B cell (primary cell): ENCODE measurements at regions of chr3 and their contacts with region 1.

Region 1: GRCh38 chr3:58305882-58306711 is at the starts of genes HTD2 and RPP14:
- DNase-seq: peak; percentile 99
- ATAC-seq: peak; percentile 90
- H3K4me3 ChIP-seq: peak within 1 kb of the TSS; percentile 74 to 87 (median 83)
- H3K4me3 Mint-ChIP-seq: peak within 1 kb of the TSS; percentile 98
- H3K27ac ChIP-seq: peak within 1 kb of the TSS; percentile 96 to 99
- H3K27ac Mint-ChIP-seq: peak within 1 kb of the TSS; percentile 100
- H3K4me1 ChIP-seq: peaks cover 24 to 27% of the 10 kb centered on the region in 2 donors
- H3K4me1 Mint-ChIP-seq: peaks cover 31% of the 10 kb centered on the region
- H3K27me3 ChIP-seq: no peaks in the 10 kb centered on the region
- H3K27me3 Mint-ChIP-seq: no peaks in the 10 kb centered on the region
- CTCF ChIP-seq: peak; percentile 90
- total RNA-seq, gene HTD2: 8.8 and 9.3 TPM in 2 replicates
- total RNA-seq, gene RPP14: 17.9 and 18.3 TPM in 2 replicates

Region 2: DNA sequence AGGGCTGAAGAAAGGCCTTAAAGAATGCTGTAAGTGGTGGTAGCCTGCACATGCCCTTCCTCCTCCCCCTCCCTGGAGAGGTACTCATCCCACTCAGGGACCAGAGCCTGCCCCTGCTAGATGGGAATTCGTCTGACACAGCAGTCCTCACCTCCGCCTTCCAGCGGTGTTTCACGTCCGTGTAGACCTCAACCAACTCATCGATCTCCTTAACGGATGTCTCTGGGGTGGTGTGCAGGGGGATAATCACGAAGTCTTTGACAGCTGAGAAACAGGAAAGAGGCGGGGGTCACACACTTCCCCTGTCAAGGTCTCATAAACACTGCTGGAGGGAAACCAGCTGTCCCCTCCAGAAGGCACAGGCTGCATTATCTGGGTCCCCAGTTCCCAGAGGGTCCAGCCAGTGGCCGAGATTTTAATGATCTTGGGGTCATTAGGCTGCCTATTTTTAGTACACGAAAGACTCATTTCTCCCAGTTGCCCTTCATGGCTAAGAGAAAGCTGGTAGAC is 105.2 kb before region 1 on chr3:
- CTCF ChIA-PET with region 1: interaction called, 17 read pairs
- POLR2A ChIA-PET with region 1: no interaction called
- intact Hi-C with region 1: no loop called
- DNase-seq: peak; percentile 44
- ATAC-seq: no peak
- H3K4me3 ChIP-seq: peak overlapping the region in 3 of 5 experiments; percentile 25 to 43 (median 41)
- H3K4me3 Mint-ChIP-seq: peak overlapping the region; percentile 76
- H3K27ac ChIP-seq: peak overlapping the region; percentile 51 to 57
- H3K27ac Mint-ChIP-seq: peak overlapping the region; percentile 87
- H3K4me1 ChIP-seq: peaks cover 69 to 74% of the 10 kb centered on the region in 2 donors
- H3K4me1 Mint-ChIP-seq: peaks cover 67% of the 10 kb centered on the region
- H3K27me3 ChIP-seq: no peaks in the 10 kb centered on the region
- H3K27me3 Mint-ChIP-seq: no peaks in the 10 kb centered on the region
- CTCF ChIP-seq: no peak

Region 3: GRCh38 chr3:58237238-58237940 is 68.7 kb before region 1 on chr3 and contains the start of gene ABHD6:
- CTCF ChIA-PET with region 1: interaction called, 19 read pairs
- POLR2A ChIA-PET with region 1: interaction called, 9 read pairs
- intact Hi-C with region 1: loop called (anchors 1 kb)
- DNase-seq: peak; percentile 93
- ATAC-seq: peak; percentile 75
- H3K4me3 ChIP-seq: peak within 1 kb of the TSS; percentile 51 to 96 (median 93)
- H3K4me3 Mint-ChIP-seq: peak within 1 kb of the TSS; percentile 97
- H3K27ac ChIP-seq: peak within 1 kb of the TSS; percentile 63 to 86
- H3K27ac Mint-ChIP-seq: peak within 1 kb of the TSS; percentile 94
- H3K4me1 ChIP-seq: peaks cover 41 to 48% of the 10 kb centered on the region in 2 donors
- H3K4me1 Mint-ChIP-seq: peaks cover 70% of the 10 kb centered on the region
- H3K27me3 ChIP-seq: no peaks in the 10 kb centered on the region
- H3K27me3 Mint-ChIP-seq: no peaks in the 10 kb centered on the region
- CTCF ChIP-seq: peak; percentile 15
- total RNA-seq, gene ABHD6: 22.2 and 24.2 TPM in 2 replicates

Region 4: GRCh38 chr3:58349792-58350626 is 43.9 kb after region 1 on chr3:
- CTCF ChIA-PET with region 1: interaction called, 15 read pairs
- POLR2A ChIA-PET with region 1: interaction called, 5 read pairs
- intact Hi-C with region 1: loop called (anchors 1 kb)
- DNase-seq: peak; percentile 84
- ATAC-seq: peak; percentile 78
- H3K4me3 ChIP-seq: peak overlapping the region; percentile 2 to 58 (median 31)
- H3K4me3 Mint-ChIP-seq: peak overlapping the region; percentile 66
- H3K27ac ChIP-seq: peak overlapping the region; percentile 80 to 97
- H3K27ac Mint-ChIP-seq: peak overlapping the region; percentile 100
- H3K4me1 ChIP-seq: peaks cover 90 to 98% of the 10 kb centered on the region in 2 donors
- H3K4me1 Mint-ChIP-seq: peaks cover 87% of the 10 kb centered on the region
- H3K27me3 ChIP-seq: no peaks in the 10 kb centered on the region
- H3K27me3 Mint-ChIP-seq: no peaks in the 10 kb centered on the region
- CTCF ChIP-seq: no peak

Region 5: GRCh38 chr3:58433400-58434169 is 127.5 kb after region 1 on chr3 and contains the start of gene PDHB:
- CTCF ChIA-PET with region 1: interaction called, 18 read pairs
- POLR2A ChIA-PET with region 1: interaction called, 5 read pairs
- intact Hi-C with region 1: loop called (anchors 1 kb)
- DNase-seq: peak; percentile 93
- ATAC-seq: peak; percentile 94
- H3K4me3 ChIP-seq: peak within 1 kb of the TSS; percentile 75 to 93 (median 91)
- H3K4me3 Mint-ChIP-seq: peak within 1 kb of the TSS; percentile 97
- H3K27ac ChIP-seq: peak within 1 kb of the TSS; percentile 82 to 87
- H3K27ac Mint-ChIP-seq: peak within 1 kb of the TSS; percentile 98
- H3K4me1 ChIP-seq: peaks cover 9 to 22% of the 10 kb centered on the region in 2 donors
- H3K4me1 Mint-ChIP-seq: peaks cover 25% of the 10 kb centered on the region
- H3K27me3 ChIP-seq: no peaks in the 10 kb centered on the region
- H3K27me3 Mint-ChIP-seq: no peaks in the 10 kb centered on the region
- CTCF ChIP-seq: no peak
- total RNA-seq, gene PDHB: 59.0 and 67.2 TPM in 2 replicates

Region 6: GRCh38 chr3:58568572-58569286 is 262.6 kb after region 1 on chr3:
- CTCF ChIA-PET with region 1: interaction called, 11 read pairs
- POLR2A ChIA-PET with region 1: no interaction called
- intact Hi-C with region 1: no loop called
- DNase-seq: peak; percentile 70
- ATAC-seq: peak; percentile 56
- H3K4me3 ChIP-seq: peak overlapping the region in 2 of 5 experiments; percentile 11 to 15
- H3K4me3 Mint-ChIP-seq: peak overlapping the region; percentile 80
- H3K27ac ChIP-seq: no peak overlapping the region
- H3K27ac Mint-ChIP-seq: no peak overlapping the region
- H3K4me1 ChIP-seq: peaks cover 4 to 6% of the 10 kb centered on the region in 2 donors
- H3K4me1 Mint-ChIP-seq: peaks cover 7% of the 10 kb centered on the region
- H3K27me3 ChIP-seq: no peaks in the 10 kb centered on the region
- H3K27me3 Mint-ChIP-seq: no peaks in the 10 kb centered on the region
- CTCF ChIP-seq: peak; percentile 98